ENCODE measurements at regions of chr3 and their contacts with region 1.

Region 1: DNA sequence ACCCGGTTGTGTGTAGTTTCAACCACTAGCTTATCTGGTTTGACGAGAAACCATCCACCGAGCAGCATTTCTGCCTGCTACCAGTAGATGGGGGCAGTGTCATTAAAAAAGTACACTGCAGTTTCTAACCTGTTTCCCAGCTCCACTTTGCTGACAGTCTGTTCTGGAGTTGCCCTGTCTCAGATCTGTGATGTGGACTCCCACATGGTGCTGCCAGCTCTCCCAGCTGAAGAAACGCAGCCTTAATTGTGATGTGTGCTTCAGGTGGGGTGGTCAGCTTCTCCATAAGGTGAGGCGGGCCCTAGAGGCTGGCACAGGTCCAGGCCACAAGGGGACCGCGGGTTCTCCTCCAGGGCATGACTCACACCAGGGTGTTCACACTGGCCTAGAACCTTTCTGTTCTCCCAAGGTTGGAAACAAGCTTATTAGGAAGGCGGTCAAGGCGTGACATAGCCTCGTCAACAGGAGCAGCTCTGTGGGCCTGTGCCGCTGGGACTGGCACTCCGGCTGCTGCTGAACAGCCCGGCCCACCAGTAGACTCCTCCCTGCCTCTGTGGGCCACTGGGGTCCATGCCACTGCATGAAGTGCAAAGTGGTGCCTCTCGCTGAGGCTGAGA is 2.9 kb upstream of the FAM43A start:
- DNase-seq: peak; percentile 79
- H3K4me3 ChIP-seq: no peak overlapping the region
- H3K27ac ChIP-seq: peak overlapping the region; percentile 31
- H3K27me3 ChIP-seq: no peaks in the 10 kb centered on the region
- CTCF ChIP-seq: peak; percentile 88

Region 2: DNA sequence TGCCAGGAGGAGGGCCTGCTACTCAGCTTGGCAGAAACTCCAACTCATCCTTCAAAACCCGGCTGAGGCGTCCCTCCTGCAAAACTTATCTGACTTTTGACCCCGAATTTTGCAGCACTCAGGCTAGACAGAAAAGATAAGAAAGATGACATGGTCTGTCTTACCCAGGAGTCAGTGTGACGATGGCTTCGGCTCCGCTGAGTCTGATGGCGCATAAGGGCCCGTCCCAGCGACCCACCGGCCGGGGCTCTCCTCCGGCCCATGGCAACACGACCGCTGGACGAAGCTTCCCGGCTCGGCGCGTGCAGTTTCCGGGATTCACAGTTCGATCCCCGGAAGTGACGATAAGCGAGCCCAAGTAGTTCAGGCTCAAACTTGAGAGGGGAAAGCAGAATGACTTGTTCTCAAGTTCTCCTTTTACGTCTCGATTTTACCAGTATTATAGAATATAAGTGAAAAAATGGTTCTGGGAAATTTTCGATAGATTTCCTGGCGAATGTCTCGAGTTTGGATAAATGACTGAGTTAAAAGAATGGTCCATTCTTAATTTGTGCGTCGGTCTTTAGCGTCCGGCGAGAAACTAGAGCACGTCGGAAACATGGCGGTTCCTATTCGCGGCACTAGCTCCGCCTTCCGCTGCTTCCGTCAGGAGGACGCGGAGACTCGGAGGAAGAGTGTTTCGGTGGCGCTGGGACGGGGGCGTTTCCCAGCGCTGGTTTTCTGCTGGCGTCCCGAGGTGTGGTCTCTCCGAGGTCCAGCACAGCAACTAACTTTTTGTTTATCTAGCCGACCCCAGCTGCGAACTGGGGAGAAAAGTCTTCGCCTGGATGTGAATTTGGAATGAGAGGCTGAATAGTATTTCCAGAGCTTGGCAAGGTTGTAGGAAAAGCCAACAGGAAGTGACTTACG is 10.6 kb before region 1 on chr3 and contains the start of gene LSG1:
- CTCF ChIA-PET with region 1: interaction called, 73 read pairs
- POLR2A ChIA-PET with region 1: interaction called, 32 read pairs
- DNase-seq: peak; percentile 87
- H3K4me3 ChIP-seq: peak within 1 kb of the TSS; percentile 95
- H3K27ac ChIP-seq: peak within 1 kb of the TSS; percentile 84
- H3K27me3 ChIP-seq: peaks cover 3% of the 10 kb centered on the region
- CTCF ChIP-seq: no peak
- polyA plus RNA-seq, gene LSG1: 30.2 and 34.0 TPM in 2 replicates

Region 3: GRCh38 chr3:194715012-194715800 is 32.4 kb after region 1 on chr3:
- CTCF ChIA-PET with region 1: no interaction called
- POLR2A ChIA-PET with region 1: no interaction called
- DNase-seq: no peak
- H3K4me3 ChIP-seq: no peak overlapping the region
- H3K27ac ChIP-seq: no peak overlapping the region
- H3K27me3 ChIP-seq: peaks cover 24% of the 10 kb centered on the region
- CTCF ChIP-seq: no peak

Region 4: DNA sequence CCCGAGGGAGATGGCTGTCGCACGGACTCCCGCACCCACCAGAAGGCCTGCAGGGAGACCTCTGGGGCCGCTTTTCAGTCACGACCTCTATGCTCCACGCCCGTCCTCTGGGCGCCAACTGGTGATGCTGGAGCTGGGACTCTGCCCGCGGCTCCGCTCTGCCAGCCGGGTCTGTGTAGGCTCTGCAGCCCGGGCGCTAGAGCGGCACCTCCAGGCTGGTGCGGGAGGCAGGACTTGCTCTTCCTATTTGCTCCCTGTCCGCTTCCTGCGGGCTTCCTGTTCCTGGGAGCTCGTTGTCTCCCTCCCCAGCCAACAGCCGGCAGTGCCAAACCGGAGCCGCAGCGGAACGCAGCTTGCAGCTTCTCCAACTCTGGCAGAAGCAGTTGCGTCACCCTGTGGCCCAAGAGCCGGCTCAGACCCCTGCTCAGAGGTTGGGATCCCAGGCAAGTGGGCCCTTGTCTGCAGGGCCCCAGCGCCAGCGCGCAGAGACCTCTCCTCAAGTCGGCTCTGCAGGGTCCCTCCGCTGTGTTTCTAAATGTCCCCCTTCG is 302.3 kb after region 1 on chr3:
- CTCF ChIA-PET with region 1: interaction called, 14 read pairs
- POLR2A ChIA-PET with region 1: interaction called, 5 read pairs
- DNase-seq: peak; percentile 41
- H3K4me3 ChIP-seq: peak overlapping the region; percentile 27
- H3K27ac ChIP-seq: no peak overlapping the region
- H3K27me3 ChIP-seq: peaks cover 12% of the 10 kb centered on the region
- CTCF ChIP-seq: peak; percentile 52

Region 5: DNA sequence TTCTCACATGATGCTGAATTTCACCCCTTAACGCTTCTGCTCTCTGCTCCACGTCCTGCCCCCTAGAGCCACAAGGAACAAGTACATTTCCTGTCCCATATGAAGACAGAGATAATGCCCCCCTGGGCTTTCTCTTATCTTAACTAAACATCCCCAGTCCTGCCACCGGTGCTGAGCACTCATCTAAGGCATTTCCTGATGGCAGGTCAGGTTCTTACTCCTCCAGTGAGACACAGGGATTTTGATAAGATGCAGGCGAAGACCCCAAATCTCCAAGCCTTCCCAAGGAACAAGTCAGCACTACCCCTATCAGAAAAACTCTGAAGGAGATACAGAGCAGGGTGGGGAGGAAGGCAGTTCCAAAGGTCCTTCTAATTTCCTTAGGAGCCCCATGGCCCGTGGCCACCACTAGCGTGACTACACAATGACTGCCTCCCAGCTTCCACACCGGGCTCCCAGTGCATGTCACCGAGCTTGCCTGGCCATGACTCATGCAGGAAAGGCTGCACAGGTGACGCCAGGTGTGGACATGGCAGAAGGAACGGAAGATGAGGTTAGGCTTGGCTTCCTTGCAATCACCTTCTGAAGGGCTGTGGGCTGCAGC is 435.3 kb after region 1 on chr3:
- CTCF ChIA-PET with region 1: interaction called, 17 read pairs
- POLR2A ChIA-PET with region 1: interaction called, 6 read pairs
- DNase-seq: no peak
- H3K4me3 ChIP-seq: no peak overlapping the region
- H3K27ac ChIP-seq: peak overlapping the region; percentile 11
- H3K27me3 ChIP-seq: no peaks in the 10 kb centered on the region
- CTCF ChIP-seq: no peak; the same call in 1 of the 2 replicates

Region 6: DNA sequence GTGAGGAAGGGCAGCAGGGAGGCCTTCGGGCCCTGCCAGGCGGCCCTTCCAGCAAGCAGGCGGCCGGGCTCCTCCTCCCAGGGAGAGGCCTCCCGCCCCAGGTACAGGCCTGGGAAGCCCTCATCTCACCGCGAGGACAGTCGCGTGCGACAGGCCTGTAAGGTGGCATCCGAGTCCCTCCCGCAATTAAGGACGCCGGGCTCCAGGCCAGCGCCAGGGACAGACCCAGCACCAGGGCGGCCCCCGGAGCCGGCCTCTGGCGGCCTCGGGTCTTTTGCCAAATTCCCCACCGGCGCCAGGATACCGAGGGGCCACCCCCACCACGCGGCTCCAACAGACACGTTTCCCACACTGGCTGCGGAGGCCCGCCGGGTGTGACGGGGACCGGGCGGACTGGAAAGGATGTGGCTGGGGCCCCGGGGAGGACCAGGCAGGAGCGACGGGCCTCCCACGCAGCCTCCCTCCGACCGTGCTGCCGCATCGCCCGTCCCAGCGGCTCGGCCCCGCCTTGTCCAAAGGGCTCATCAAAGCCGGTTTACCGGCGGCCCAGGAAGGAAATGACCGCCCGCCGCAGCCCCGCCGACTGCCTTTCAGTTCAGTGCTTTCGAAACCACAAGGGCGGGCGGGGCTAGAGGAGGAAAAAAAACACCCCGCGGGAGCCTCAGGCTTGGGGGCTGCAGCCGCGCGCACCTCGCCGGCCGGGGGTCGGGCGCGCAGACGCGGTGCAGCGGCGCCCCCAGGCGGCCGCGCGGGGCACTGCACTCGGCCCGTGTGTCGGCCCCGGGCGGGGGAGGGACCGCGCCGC is 576.9 kb after region 1 on chr3:
- CTCF ChIA-PET with region 1: interaction called, 36 read pairs
- POLR2A ChIA-PET with region 1: interaction called, 8 read pairs
- DNase-seq: peak; percentile 78
- H3K4me3 ChIP-seq: peak overlapping the region; percentile 74
- H3K27ac ChIP-seq: peak overlapping the region; percentile 88
- H3K27me3 ChIP-seq: no peaks in the 10 kb centered on the region
- CTCF ChIP-seq: no peak

Region 7: DNA sequence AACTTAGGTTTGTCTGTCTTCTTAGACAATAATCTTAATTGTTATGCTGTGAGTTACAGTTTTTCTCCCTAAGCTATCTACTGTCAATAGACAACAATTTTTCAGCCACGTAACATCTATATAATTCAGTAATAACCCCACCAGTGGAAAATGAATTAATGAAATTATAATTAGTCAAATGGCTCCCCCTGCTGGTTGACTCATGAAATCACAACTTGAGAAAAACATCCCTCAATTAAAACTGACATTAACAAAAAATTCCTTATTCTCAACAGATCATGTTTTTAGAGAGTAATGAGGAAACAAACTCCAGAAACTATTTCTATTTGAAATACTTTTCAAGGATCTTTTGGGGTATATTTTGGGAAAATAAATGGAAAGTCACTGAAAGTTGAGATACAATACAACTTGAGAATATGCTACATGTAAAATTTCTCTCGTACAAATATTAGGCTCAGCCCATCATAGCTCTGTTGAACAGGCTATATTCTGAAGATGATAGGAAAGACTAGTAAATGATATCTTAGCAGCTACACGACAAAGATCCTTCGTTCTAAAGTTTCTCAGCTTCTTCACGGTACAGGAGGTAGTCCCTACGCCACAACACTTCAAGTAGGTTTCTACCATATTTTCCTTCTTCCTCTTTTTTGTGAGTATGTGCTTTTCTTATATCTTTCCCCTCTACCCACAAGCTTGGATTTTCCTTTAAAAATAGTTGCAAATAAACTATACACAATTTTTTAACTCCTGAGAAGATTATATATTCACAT is 839.6 kb after region 1 on chr3:
- CTCF ChIA-PET with region 1: interaction called, 12 read pairs
- POLR2A ChIA-PET with region 1: no interaction called
- DNase-seq: no peak
- H3K4me3 ChIP-seq: no peak overlapping the region
- H3K27ac ChIP-seq: no peak overlapping the region
- H3K27me3 ChIP-seq: no peaks in the 10 kb centered on the region
- CTCF ChIP-seq: peak; percentile 52